ENCODE measurements at regions of chr4 and their contacts with region 1.

Region 1: DNA sequence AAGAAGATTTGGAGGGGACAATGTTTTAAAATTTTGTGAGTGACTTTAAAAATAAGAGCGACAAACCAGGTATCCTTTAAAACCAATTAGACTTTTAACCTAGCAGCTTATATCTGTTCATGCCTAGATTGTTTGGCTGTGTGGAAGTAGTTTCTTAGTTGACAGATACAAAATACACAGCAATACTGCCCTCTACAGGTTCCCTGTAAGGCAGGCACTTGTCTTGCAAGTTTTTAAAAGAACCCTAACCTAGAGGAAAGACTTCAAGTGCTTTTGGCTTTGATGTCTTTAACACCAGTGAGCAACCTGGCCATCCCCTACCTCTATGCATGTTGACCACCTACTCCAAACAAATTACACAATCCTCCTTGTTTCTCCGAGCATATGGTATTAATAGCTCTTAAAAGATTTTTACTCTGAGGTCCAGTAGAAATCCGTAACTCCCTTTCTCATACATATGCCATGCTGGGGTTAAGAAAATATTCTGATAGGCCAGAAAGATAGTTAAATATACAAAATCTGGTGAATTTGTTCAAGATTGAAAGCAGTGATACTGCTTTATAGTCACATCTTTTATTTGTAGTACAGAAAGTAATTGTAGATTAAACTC is 273.0 kb downstream of the ARHGAP24 start:
- DNase-seq: peak; percentile 7 to 48
- H3K4me3 ChIP-seq: no peak overlapping the region
- H3K27ac ChIP-seq: no peak overlapping the region
- H3K4me1 ChIP-seq: no peaks in the 10 kb centered on the region
- H3K27me3 ChIP-seq: no peaks in the 10 kb centered on the region
- CTCF ChIP-seq: peak; percentile 76

Region 2: DNA sequence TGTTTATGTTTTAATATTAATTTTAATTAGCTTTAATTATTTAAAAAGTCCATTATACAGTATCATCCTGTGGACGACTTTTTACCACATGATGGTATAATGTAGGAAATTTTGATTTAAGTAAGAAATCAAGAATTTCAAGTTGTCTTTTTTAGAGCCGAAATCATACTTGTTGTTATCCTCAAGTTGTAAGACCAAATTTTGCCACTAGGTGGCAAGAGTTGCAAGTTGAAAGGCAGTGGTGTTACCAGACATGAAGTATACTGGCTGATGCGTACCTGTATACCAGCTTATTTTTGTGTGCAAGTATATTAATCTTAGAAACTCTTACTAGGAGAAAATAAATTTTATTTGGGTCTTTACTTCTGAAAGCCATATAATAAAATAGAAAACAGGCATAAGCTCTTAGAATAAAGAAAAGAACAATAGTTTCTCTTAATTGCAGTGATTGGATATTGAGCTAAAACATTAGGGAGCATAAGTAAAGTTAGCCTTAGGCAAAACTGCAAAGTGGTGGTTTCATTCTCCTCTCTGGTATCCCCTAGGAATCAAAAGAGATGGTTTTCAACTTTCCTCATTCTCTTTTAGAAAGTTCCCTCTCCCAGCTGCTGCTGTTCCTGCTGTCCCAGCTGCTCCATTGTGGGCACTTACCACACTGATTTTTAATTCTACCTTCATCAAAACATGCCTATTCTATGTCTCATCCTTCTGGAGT is 663.5 kb before region 1 on chr4:
- CTCF ChIA-PET with region 1: interaction called, 3 read pairs
- POLR2A ChIA-PET with region 1: no interaction called
- intact Hi-C with region 1: loop called (anchors 1 kb)
- DNase-seq: peak in 1 of 2 experiments; percentile 4
- H3K4me3 ChIP-seq: no peak overlapping the region
- H3K27ac ChIP-seq: no peak overlapping the region
- H3K4me1 ChIP-seq: no peaks in the 10 kb centered on the region
- H3K27me3 ChIP-seq: no peaks in the 10 kb centered on the region
- CTCF ChIP-seq: peak; percentile 74

Region 3: DNA sequence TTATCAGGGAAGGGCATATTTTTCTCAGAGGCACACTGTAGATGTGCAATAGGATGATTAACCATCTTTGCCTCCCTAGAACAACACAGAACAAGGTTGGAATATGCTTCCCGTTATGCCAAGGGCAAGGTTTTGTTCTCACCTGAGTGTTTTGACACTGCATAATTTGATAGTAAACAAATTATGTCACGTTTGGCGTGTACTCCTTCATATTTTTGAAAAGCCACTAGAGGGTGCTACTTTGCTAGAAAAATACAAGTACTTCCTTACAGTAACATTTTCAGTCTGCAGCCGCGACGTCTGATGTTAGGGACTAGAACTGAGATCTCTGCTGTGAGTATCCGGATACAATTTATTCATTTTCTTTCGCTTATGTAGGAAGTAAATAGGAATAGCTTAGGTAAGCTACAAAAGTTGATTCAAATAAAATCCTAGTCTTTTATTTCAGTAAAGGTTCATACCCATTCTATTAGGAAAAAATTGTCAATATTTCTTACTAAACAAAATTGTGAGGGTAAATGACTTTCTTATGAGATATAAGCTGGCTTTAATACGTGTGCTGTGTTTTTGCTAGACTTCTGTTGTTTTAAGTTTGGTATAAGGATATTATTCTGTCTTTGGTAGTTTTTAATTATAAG is 600.4 kb before region 1 on chr4:
- CTCF ChIA-PET with region 1: interaction called, 3 read pairs
- POLR2A ChIA-PET with region 1: no interaction called
- intact Hi-C with region 1: loop called (anchors 1 kb)
- DNase-seq: peak; percentile 10 to 59
- H3K4me3 ChIP-seq: no peak overlapping the region
- H3K27ac ChIP-seq: no peak overlapping the region
- H3K4me1 ChIP-seq: no peaks in the 10 kb centered on the region
- H3K27me3 ChIP-seq: no peaks in the 10 kb centered on the region
- CTCF ChIP-seq: peak; percentile 72

Region 4: DNA sequence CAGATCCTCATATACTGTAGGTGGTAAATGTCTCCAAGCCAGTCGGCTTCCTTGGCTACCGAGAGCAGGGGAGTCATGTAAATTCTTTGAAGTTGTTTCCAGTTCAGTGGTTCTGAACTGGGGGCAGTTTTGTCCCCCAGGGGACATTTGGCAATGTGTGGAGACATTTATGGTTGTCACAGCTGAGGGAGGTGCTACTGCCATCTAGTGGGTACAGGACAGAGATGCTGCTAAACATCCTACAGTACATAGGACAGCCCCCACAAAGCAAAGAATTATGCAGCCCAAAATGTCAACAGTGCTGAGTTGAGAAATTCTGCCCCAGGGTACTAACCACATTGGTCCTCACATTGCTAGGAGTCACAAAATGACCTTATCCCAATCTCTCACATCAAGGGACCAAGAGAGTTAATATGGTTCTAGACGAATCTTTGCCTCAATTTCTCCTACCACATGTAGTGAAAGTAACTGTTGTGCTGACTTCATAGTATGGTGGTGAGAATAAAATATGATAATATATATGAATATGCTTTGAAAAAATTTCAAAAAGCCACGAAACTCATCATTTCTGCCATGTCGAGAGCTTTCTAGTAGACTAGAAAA is 377.5 kb before region 1 on chr4:
- CTCF ChIA-PET with region 1: no interaction called
- POLR2A ChIA-PET with region 1: no interaction called
- intact Hi-C with region 1: loop called (anchors 5 kb)
- DNase-seq: peak in 1 of 2 experiments; percentile 19
- H3K4me3 ChIP-seq: no peak overlapping the region
- H3K27ac ChIP-seq: no peak overlapping the region
- H3K4me1 ChIP-seq: no peaks in the 10 kb centered on the region
- H3K27me3 ChIP-seq: no peaks in the 10 kb centered on the region
- CTCF ChIP-seq: peak; percentile 77

Region 5: GRCh38 chr4:85474818-85475630 is 273.0 kb before region 1 on chr4 and contains the start of gene ARHGAP24:
- CTCF ChIA-PET with region 1: no interaction called
- POLR2A ChIA-PET with region 1: no interaction called
- intact Hi-C with region 1: loop called (anchors 10 kb)
- DNase-seq: peak; percentile 88 to 93
- H3K4me3 ChIP-seq: peak within 1 kb of the TSS; percentile 81
- H3K27ac ChIP-seq: peak within 1 kb of the TSS; percentile 64
- H3K4me1 ChIP-seq: peaks cover 12% of the 10 kb centered on the region
- H3K27me3 ChIP-seq: no peaks in the 10 kb centered on the region
- CTCF ChIP-seq: no peak
- total RNA-seq, gene ARHGAP24: 2.2 and 5.4 TPM in 2 replicates

Region 6: DNA sequence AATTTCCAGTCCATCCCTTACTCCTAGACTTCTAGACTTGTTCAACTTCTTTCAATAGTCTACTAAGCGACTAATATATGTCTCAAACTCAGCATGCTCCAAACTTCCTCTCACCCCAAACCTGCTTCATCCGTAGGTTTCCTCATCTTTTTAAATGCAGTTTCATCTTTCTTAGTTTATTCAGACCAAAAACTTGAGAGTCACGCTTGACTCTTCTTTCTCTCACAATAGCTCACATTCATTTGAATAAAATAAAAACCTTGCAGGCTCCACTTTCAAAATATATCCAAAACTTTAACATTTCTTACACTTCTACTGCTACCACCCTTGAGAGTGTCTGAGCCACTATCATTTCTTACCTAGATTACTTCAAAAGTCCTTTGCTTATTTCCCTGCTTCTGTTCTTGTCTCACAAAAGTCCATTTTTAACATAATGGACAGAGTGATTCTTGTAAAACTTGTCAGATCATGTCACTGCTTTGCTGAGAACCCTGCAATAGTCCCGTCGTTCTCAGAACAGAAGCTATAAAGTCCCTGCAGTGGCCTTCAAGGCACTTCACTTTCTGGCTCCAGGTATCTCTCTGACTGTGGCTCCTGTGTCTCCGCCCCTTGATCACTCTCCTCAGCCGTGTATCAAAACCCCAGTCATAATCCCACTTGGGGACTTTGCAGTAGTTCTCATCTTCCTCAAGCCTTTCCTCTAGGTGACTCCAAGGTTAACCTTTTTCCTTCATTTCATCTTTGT is 105.5 kb before region 1 on chr4:
- CTCF ChIA-PET with region 1: no interaction called
- POLR2A ChIA-PET with region 1: no interaction called
- intact Hi-C with region 1: no loop called
- DNase-seq: no peak
- H3K4me3 ChIP-seq: no peak overlapping the region
- H3K27ac ChIP-seq: no peak overlapping the region
- H3K4me1 ChIP-seq: no peaks in the 10 kb centered on the region
- H3K27me3 ChIP-seq: no peaks in the 10 kb centered on the region
- CTCF ChIP-seq: no peak

Region 7: GRCh38 chr4:85854546-85854945 is 106.6 kb after region 1 on chr4:
- CTCF ChIA-PET with region 1: no interaction called
- POLR2A ChIA-PET with region 1: no interaction called
- intact Hi-C with region 1: no loop called
- DNase-seq: no peak
- H3K4me3 ChIP-seq: no peak overlapping the region
- H3K27ac ChIP-seq: no peak overlapping the region
- H3K4me1 ChIP-seq: no peaks in the 10 kb centered on the region
- H3K27me3 ChIP-seq: no peaks in the 10 kb centered on the region
- CTCF ChIP-seq: no peak

Measured in PC-9 (cell line).